ENCODE measurements at regions of chr6 and their contacts with region 1.

Region 1: DNA sequence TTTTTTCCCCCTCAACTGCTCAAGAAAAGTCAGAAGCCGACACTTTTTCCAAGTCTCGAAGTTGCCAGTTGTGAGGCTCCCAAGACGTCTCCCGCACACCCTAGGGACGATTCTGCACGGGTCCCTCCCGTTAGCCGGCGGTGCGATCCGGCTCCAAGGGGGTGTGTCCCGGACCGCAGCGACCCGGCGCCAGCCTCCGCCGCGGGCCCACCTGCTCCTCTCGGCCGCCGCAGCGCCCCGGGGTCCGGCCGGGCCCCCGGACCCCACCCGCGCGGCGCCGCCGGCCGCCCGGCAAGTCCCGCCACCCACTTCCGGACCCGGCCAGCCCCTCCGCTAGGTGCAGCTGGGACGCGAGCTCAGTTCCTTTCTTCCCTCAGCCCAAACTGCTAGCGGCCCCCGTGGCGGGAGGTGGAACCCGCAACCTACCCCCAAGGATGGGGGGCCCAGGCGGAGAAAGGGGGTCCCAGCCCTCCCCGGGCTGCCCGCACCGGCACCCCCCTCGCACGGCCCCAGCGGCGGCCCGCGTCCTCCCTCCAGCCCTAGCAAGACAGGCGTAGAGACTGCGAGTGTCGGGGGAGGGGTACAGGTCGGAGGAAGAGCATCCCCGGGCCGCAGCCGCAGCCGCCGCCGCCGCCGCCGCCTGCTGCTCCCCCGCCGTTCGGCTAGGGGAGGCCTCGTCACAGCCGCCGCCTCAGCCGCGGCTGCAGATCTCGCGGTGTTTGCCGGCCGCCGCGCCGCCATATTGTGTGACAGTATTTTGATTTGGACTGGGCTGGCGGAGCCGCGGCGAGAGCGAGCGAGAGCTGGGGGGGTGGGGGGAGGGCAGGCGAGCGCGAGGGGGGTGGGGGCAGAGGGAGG is 485 bp upstream of the TAB2 start:
- DNase-seq: peak; percentile 91
- ATAC-seq: peak; percentile 60
- H3K4me3 Mint-ChIP-seq: peak overlapping the region; percentile 93
- H3K27ac Mint-ChIP-seq: peak overlapping the region; percentile 98
- H3K4me1 Mint-ChIP-seq: peaks cover 27% of the 10 kb centered on the region
- H3K27me3 Mint-ChIP-seq: no peaks in the 10 kb centered on the region
- CTCF ChIP-seq: no peak

Region 2: DNA sequence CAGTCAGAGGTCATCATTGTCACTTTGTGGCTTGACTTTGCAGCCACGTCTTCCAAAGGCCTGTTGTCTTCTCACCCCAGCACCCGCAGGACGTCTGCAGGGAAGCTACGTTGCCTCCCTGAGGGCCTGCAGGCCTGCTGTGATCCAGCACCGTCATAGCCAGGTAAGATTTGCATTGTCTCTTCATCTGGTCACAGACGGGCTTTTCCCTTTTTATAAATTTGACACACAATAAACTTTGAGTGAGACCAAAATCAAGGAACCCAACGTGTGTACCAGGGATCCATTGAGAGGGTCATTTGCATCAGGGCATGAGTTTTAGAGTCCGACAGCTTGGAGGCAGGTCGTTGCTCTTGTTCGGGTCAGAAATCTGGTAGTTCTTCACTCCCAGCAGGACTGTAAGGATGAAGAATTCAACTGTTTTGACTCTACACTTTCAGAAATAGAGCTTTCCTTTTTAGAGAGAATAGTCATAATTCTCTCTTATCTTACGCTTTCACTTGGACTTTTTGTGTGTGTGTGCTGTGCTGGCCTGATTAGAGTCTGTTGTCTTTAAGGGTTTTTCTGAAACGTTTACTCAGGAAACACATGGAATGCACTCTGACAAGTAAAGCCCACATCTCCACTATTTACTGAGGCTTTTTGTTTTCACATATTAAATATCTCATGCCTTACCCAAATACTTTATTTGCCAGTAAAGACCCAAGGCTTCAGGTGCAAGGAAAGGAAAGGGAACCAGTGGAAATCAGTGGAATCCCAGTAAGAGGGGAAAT is 176.7 kb before region 1 on chr6:
- CTCF ChIA-PET with region 1: no interaction called
- POLR2A ChIA-PET with region 1: interaction called, 7 read pairs
- intact Hi-C with region 1: loop called (anchors 2 kb)
- DNase-seq: peak; percentile 85
- ATAC-seq: peak; percentile 85
- H3K4me3 Mint-ChIP-seq: peak overlapping the region; percentile 56
- H3K27ac Mint-ChIP-seq: peak overlapping the region; percentile 97
- H3K4me1 Mint-ChIP-seq: peaks cover 48% of the 10 kb centered on the region
- H3K27me3 Mint-ChIP-seq: no peaks in the 10 kb centered on the region
- CTCF ChIP-seq: no peak

Region 3: GRCh38 chr6:149217466-149217888 is 99.5 kb before region 1 on chr6:
- CTCF ChIA-PET with region 1: no interaction called
- POLR2A ChIA-PET with region 1: interaction called, 18 read pairs
- intact Hi-C with region 1: no loop called
- DNase-seq: no peak
- ATAC-seq: no peak
- H3K4me3 Mint-ChIP-seq: no peak overlapping the region
- H3K27ac Mint-ChIP-seq: no peak overlapping the region
- H3K4me1 Mint-ChIP-seq: peaks cover 27% of the 10 kb centered on the region
- H3K27me3 Mint-ChIP-seq: no peaks in the 10 kb centered on the region
- CTCF ChIP-seq: no peak

Region 4: DNA sequence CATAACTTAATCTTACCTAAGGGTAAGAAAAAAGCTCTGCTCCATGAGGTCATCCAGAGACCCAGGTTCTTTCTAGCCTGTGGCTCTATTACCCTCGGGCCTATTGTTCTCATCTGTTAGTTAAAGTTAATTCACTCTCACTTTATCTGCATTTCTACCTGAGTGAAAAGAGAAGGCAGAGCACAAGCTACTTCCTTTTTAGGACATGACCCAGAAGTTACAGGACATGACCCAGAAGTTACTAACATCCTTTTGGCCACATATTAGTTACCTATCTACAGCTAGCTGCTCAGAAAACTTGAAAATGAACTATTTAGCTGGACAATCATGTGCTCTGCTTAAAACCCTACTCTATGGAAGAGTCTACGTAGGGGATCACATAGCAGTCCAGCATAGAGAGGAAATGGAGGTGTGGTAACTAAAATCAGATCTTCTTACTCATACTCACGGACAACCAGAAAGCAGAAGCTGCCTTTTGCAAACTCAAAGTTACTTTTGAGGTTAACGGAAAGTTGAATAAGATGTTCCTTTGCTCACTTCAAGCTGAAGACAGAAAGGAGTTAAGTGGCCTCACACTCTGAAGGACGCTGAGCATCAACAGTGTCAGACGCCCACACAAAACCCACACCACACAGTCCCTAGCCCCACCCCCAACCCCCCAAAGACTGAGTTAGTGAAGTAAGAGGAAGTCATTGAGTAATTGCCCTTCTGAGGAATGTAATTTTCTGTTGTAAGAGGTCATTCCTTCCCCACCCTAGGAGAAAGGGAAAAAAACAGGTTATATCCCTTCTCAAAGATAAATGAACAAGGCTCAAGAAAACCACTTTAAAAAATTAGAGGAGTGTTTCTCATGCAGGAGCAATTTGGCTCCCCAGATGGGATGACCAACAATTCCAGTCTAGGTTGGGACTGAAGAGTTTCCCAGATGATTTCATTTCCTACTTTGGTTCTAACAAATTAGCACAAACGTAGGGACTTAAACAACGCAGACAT is 45.4 kb before region 1 on chr6:
- CTCF ChIA-PET with region 1: no interaction called
- POLR2A ChIA-PET with region 1: interaction called, 3 read pairs
- intact Hi-C with region 1: loop called (anchors 5 kb)
- DNase-seq: peak; percentile 94
- ATAC-seq: peak; percentile 94
- H3K4me3 Mint-ChIP-seq: peak overlapping the region; percentile 43
- H3K27ac Mint-ChIP-seq: peak overlapping the region; percentile 93
- H3K4me1 Mint-ChIP-seq: peaks cover 38% of the 10 kb centered on the region
- H3K27me3 Mint-ChIP-seq: no peaks in the 10 kb centered on the region
- CTCF ChIP-seq: no peak